Activated CD4-positive, alpha-beta T cell treated with anti-CD3 and anti-CD28 coated beads for 36 hours (primary cell): ENCODE measurements at regions of chr12 and their contacts with region 1.

Region 1: GRCh38 chr12:57182921-57183790 is 33.4 kb upstream of the NXPH4 start:
- DNase-seq: peak; percentile 89
- ATAC-seq: peak; percentile 99
- H3K4me3 Mint-ChIP-seq: no peak overlapping the region
- H3K27ac Mint-ChIP-seq: no peak overlapping the region
- H3K4me1 Mint-ChIP-seq: peaks cover 2% of the 10 kb centered on the region
- H3K27me3 Mint-ChIP-seq: no peaks in the 10 kb centered on the region

Region 2: DNA sequence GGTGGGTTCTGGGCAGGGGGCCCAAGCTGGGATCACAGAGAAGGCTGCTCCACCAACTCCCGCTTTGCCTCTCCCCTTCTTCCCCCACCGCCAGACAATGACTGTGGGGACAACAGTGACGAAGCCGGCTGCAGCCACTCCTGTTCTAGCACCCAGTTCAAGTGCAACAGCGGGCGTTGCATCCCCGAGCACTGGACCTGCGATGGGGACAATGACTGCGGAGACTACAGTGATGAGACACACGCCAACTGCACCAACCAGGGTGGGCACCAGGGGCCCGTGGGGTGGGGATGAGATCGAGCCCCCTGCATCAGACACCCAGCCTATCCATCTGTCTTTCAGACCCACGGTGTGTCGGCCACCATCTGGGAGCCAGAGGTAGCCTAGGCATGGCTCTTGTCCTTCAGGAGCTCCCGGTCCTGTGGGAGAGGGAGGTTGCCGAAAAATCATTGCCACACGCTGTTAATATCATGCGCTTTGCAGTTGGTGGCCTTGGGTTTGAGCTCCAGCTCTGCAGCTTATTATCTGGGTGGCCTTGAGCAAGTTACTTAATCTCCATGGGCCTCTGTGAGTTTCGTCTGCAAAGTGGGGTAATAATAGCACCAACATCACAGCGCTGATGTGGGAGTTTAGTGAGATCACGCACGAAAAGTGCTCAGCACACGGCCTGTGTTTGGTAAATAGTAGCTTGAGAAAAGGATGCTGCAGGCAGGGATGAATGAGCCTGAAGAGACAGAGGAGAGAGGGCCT is 13.9 kb before region 1 on chr12:
- CTCF ChIA-PET with region 1: interaction called, 20 read pairs
- POLR2A ChIA-PET with region 1: no interaction called
- intact Hi-C with region 1: no loop called
- DNase-seq: no peak
- ATAC-seq: no peak
- H3K4me3 Mint-ChIP-seq: no peak overlapping the region
- H3K27ac Mint-ChIP-seq: no peak overlapping the region
- H3K4me1 Mint-ChIP-seq: peaks cover 13% of the 10 kb centered on the region
- H3K27me3 Mint-ChIP-seq: no peaks in the 10 kb centered on the region

Region 3: DNA sequence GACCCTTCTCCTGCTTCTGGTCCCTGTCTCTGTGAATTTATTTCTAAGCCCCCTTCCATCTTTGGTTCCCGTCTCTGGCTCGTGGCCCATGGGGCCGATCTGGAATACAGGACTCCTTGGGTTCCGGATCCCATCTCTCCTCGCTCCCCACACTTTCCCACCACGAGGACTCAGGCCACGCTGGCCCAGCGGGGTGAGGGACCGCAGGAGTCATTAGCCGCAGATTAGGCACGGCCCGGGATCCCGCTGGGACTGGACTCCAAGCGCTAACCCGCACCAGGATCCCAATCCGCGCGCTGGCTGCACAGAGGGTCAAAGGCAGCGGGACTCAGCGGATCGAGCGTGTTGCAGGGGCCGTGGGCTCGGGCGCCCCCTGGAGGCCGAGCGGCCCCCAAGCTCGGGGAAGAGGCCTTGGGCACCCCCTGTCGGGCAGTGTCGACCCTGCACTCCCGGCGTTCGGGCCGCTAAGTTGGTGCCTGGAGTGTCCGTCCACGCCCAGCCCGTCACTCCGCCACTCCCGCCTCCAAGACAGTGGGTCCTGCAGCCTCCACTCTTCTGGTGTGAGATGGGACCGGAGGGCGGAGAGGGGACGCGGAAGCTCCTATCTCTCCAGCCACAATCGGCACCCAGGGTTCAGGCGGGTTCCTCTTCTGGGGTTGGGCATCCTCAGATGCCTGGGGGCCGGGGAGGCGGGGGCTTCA is 55.8 kb after region 1 on chr12:
- CTCF ChIA-PET with region 1: interaction called, 6 read pairs
- POLR2A ChIA-PET with region 1: no interaction called
- intact Hi-C with region 1: loop called in 1 of 2 experiments (anchors 2 kb)
- DNase-seq: peak; percentile 94
- ATAC-seq: peak; percentile 57
- H3K4me3 Mint-ChIP-seq: peak overlapping the region; percentile 83
- H3K27ac Mint-ChIP-seq: peak overlapping the region; percentile 80
- H3K4me1 Mint-ChIP-seq: peaks cover 70% of the 10 kb centered on the region
- H3K27me3 Mint-ChIP-seq: peaks cover 44% of the 10 kb centered on the region

Region 4: DNA sequence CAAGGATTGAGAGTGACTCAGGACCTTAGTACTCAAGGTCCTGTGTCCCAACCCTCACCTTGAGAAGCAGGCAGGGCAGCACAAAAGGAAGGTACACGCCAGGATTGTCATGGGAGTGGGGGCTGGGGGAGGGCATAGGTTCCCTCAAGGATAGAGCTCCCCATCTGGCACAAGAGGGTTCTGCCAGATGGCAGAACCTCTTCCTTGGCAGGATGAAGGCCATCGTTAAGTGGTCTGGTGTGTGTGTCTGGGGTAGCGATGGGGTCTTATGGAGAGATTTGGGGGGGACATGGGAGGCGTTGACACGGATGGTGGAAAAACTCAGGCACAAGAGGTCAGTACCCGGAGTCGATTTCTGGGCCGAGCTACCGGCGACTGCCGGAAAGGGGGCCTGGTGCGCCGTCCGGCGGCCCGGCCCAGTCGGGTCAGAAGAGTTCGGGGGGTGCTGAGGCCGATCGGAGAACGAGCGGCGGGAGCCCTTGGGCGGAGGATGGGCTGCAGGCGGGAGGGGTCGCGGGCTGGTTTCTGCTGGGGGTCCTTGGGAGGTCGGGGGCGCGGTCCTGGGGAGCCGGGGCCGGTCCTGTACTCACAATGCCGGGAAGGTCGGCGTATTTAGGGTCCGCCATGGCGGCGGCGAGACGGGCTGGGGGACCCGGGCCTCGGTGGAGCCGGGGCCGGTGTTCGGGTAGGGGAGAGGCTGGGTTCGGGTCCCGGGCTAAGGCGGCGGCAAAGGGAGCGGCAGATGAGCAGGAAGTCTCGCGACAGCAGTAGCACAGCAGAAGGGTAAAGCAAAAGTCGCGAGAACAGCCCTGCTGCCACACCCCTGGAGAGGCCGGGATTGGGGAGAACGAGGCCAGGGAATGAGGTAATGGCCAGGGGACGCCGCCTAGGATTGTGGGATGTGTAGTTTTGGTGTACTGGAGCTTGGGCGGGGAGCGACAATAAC is 363.6 kb after region 1 on chr12 and contains the start of gene DCTN2:
- CTCF ChIA-PET with region 1: no interaction called
- POLR2A ChIA-PET with region 1: no interaction called
- intact Hi-C with region 1: no loop called
- DNase-seq: peak; percentile 97
- ATAC-seq: peak; percentile 98
- H3K4me3 Mint-ChIP-seq: peak within 1 kb of the TSS; percentile 99
- H3K27ac Mint-ChIP-seq: peak within 1 kb of the TSS; percentile 99
- H3K4me1 Mint-ChIP-seq: peaks cover 45% of the 10 kb centered on the region
- H3K27me3 Mint-ChIP-seq: peaks cover 13% of the 10 kb centered on the region
- total RNA-seq, gene DCTN2: 69.7 to 81.2 TPM